ENCODE measurements at regions of chr7 and their contacts with region 1.

Region 1: DNA sequence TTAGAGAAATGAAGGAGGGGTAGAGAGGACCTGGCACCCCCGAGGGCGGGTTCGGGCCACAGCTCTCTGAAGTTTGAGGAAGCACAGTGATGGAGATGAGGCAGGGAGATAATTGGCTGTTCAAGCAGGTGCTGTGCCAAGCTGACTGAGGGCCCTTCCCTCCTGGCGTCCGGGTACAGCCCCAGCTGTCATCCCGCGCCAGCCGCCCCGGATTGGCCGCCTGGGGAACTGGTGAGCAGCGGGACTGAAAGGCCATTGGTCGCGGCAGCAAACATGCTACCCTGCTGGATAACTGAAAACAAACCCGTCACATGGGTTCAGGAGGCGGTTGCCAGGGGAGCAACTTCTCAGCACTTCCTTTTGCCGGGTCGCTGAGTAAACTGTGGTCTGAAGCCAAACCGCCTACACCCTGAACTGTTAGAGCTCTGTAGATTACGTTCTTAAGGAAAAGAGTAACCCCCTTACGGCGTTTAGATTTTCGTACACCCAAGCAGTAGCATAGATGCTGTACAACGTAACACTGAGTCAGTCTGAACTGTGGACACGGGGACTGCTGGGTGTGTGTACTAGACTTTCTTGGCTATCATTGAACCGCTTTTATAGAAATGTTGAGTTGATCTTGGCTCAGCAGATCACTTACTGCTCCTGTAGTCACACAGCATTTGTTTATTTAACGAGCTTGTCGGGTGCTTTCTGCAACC is 1.3 kb downstream of the INSIG1 start:
- DNase-seq: peak; percentile 99
- H3K4me3 Mint-ChIP-seq: peak overlapping the region; percentile 94
- H3K27ac Mint-ChIP-seq: peak overlapping the region; percentile 97
- H3K4me1 Mint-ChIP-seq: peaks cover 42% of the 10 kb centered on the region
- H3K27me3 Mint-ChIP-seq: no peaks in the 10 kb centered on the region

Region 2: GRCh38 chr7:155003376-155004214 is 295.4 kb before region 1 on chr7:
- intact Hi-C with region 1: loop called (anchors 1 kb)
- DNase-seq: peak; percentile 94
- H3K4me3 Mint-ChIP-seq: peak overlapping the region; percentile 94
- H3K27ac Mint-ChIP-seq: peak overlapping the region; percentile 94
- H3K4me1 Mint-ChIP-seq: peaks cover 9% of the 10 kb centered on the region
- H3K27me3 Mint-ChIP-seq: no peaks in the 10 kb centered on the region

Region 3: DNA sequence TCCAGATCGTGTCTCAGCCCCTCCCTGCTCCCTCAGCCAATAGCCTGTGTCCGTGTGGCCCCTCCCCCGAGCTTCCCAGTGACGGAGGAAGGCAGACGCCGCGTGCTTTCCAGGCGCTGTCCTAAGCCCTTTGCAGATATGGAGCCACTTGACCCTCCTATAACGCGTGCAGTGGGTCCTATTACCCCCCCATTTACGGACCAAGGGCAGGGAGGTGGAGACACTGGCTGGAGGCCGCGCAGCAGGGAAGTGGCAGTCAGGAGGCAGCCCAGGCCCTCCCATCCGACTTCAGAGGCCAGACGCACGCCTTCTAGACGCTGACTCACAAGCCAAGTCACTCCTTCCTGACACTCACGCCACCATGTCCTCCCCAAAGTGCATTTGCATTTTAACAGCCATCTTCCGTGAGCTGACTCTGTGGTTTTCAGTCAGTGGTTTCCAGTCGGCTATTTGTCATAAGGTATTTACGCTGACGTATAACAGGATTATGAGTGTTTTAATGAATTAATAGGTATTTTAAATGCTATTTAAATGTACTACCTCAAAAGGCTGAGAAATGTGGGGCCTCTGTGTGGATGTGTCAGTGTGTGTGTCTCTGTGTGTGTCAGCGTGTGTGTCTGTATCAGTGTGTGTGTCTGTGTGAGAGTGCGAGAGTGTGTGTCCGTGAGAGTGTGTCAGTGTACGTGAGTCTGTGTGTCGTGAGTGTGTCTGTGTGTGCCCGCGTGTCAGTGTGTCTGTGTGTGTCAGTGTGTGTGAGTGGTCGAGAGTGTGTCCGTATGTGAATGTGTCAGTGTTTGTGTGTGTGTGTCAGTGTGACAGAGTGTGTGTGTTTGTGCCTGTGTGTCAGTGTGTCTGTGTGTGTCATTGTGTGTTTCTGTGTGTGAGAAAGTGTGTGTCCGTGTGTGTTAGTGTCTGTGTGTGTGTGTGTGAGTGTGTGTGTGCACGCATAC is 93.3 kb before region 1 on chr7:
- intact Hi-C with region 1: loop called (anchors 1 kb)
- DNase-seq: peak; percentile 96
- H3K4me3 Mint-ChIP-seq: peak overlapping the region; percentile 85
- H3K27ac Mint-ChIP-seq: peak overlapping the region; percentile 96
- H3K4me1 Mint-ChIP-seq: peaks cover 34% of the 10 kb centered on the region
- H3K27me3 Mint-ChIP-seq: no peaks in the 10 kb centered on the region

Region 4: GRCh38 chr7:155283565-155284194 is 15.3 kb before region 1 on chr7:
- intact Hi-C with region 1: loop called (anchors 1 kb)
- DNase-seq: peak; percentile 63
- H3K4me3 Mint-ChIP-seq: peak overlapping the region; percentile 3
- H3K27ac Mint-ChIP-seq: peak overlapping the region; percentile 38
- H3K4me1 Mint-ChIP-seq: peaks cover 67% of the 10 kb centered on the region
- H3K27me3 Mint-ChIP-seq: peaks cover 2% of the 10 kb centered on the region